ENCODE measurements at regions of chr1 and their contacts with region 1.

Region 1: GRCh38 chr1:24018611-24019580 is 38.8 kb upstream of the SRSF10 start:
- DNase-seq: peak; percentile 99
- ATAC-seq: peak; percentile 95
- H3K4me3 ChIP-seq: peak overlapping the region; percentile 31; the same call in 1 of the 2 replicates
- H3K27ac ChIP-seq: peak overlapping the region; percentile 96
- H3K4me1 ChIP-seq: peaks cover 34% of the 10 kb centered on the region
- H3K27me3 ChIP-seq: no peaks in the 10 kb centered on the region
- CTCF ChIP-seq: no peak

Region 2: GRCh38 chr1:23979878-23980724 is 38.8 kb before region 1 on chr1 and contains the start of gene SRSF10:
- CTCF ChIA-PET with region 1: no interaction called
- POLR2A ChIA-PET with region 1: interaction called, 3 read pairs
- intact Hi-C with region 1: loop called (anchors 1 kb)
- DNase-seq: peak; percentile 99
- ATAC-seq: peak; percentile 96
- H3K4me3 ChIP-seq: peak within 1 kb of the TSS; percentile 94
- H3K27ac ChIP-seq: peak within 1 kb of the TSS; percentile 81
- H3K4me1 ChIP-seq: peaks cover 26% of the 10 kb centered on the region
- H3K27me3 ChIP-seq: no peaks in the 10 kb centered on the region
- CTCF ChIP-seq: peak; percentile 28; the same call in 1 of the 2 replicates
- total RNA-seq, gene SRSF10: 109 and 121 TPM in 2 replicates

Measured in PC-3 (cell line).